Activated CD4-positive, alpha-beta memory T cell treated with anti-CD3 and anti-CD28 coated beads for 36 hours (primary cell): ENCODE measurements at regions of chr13 and their contacts with region 1.

Region 1: DNA sequence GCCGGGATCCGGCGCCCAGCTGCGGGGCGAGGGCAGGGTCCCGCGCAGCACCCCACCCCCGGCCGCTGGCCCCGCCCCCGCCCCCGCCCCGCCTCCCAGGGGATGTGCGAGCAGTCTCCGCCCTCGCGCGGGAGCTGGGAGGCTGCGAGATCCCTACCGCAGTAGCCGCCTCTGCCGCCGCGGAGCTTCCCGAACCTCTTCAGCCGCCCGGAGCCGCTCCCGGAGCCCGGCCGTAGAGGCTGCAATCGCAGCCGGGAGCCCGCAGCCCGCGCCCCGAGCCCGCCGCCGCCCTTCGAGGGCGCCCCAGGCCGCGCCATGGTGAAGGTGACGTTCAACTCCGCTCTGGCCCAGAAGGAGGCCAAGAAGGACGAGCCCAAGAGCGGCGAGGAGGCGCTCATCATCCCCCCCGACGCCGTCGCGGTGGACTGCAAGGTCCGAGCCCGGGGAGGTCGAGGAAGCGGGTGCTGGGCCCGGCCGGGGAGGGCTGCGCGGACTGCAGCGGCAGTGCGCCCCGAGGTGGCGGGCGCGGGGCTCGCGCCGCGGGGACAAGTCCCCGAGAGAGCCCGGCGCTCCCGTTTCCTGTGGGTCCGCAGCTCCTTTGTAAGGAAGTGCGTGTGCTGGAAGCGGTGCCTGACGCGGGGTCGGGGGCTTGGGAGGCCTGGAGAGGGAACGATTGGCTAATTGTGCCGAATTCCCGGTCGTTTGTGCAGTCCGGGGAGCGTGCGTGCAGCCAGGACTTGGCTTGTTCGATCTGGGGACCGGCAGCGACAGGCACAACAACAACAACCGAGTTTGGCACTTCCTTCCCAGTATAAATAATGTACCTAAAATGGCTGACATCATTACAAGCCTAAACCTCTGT is at the start of gene ITM2B:
- DNase-seq: peak; percentile 74
- H3K4me3 Mint-ChIP-seq: peak within 1 kb of the TSS; percentile 93
- H3K27ac Mint-ChIP-seq: peak within 1 kb of the TSS; percentile 95
- H3K4me1 Mint-ChIP-seq: peaks cover 57% of the 10 kb centered on the region
- H3K27me3 Mint-ChIP-seq: no peaks in the 10 kb centered on the region
- total RNA-seq, gene ITM2B: 87.6 to 92.6 TPM

Region 2: GRCh38 chr13:48018625-48019024 is 214.7 kb before region 1 on chr13:
- CTCF ChIA-PET with region 1: no interaction called
- POLR2A ChIA-PET with region 1: no interaction called
- intact Hi-C with region 1: no loop called
- DNase-seq: no peak
- H3K4me3 Mint-ChIP-seq: no peak overlapping the region
- H3K27ac Mint-ChIP-seq: no peak overlapping the region
- H3K4me1 Mint-ChIP-seq: no peaks in the 10 kb centered on the region
- H3K27me3 Mint-ChIP-seq: no peaks in the 10 kb centered on the region

Region 3: DNA sequence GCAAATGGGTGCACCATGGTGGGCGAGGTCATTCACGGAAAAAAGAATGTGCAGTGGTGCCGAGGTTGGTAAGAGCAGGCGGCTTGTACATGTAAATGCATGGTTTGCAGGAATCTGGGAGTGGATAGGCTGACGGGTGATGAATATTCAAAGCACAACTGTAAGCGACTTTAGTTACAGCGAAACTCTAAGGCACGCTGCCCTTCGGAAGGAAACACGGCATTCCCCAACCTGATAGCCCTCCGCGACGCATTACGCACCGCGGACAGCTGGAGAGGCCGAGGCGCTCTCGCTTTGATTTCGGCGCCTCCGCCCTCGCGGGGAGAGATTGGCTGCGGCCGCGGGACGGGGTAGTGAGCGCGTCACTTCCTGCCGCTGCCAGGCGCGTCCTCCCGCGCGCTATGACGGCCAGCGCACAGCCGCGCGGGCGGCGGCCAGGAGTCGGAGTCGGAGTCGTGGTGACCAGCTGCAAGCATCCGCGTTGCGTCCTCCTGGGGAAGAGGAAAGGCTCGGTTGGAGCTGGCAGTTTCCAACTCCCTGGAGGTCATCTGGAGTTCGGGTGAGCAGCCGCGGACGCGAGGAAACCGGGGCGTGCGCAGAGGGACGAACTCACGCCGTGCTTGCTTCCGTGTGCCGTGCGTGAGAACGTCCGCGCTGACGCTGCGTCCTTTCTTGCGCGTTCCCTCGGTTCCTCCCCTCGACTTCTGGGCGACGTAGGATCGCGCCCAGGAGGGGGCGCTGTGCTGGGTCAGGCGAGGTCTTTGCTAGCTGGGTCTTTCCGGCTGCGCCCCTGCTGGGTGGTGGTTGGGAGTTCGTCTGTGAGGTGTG is 195.7 kb before region 1 on chr13 and contains the start of gene NUDT15:
- CTCF ChIA-PET with region 1: interaction called, 5 read pairs
- POLR2A ChIA-PET with region 1: interaction called, 4 read pairs
- intact Hi-C with region 1: loop called (anchors 5 kb)
- DNase-seq: peak; percentile 97
- H3K4me3 Mint-ChIP-seq: peak within 1 kb of the TSS; percentile 96
- H3K27ac Mint-ChIP-seq: peak within 1 kb of the TSS; percentile 98
- H3K4me1 Mint-ChIP-seq: peaks cover 29% of the 10 kb centered on the region
- H3K27me3 Mint-ChIP-seq: no peaks in the 10 kb centered on the region
- total RNA-seq, gene NUDT15: 18.5 to 19.2 TPM

Region 4: GRCh38 chr13:48155848-48156247 is 77.4 kb before region 1 on chr13:
- CTCF ChIA-PET with region 1: no interaction called
- POLR2A ChIA-PET with region 1: no interaction called
- intact Hi-C with region 1: loop called (anchors 1 kb)
- DNase-seq: no peak
- H3K4me3 Mint-ChIP-seq: peak overlapping the region; percentile 64
- H3K27ac Mint-ChIP-seq: peak overlapping the region; percentile 95
- H3K4me1 Mint-ChIP-seq: peaks cover 84% of the 10 kb centered on the region
- H3K27me3 Mint-ChIP-seq: no peaks in the 10 kb centered on the region

Region 5: DNA sequence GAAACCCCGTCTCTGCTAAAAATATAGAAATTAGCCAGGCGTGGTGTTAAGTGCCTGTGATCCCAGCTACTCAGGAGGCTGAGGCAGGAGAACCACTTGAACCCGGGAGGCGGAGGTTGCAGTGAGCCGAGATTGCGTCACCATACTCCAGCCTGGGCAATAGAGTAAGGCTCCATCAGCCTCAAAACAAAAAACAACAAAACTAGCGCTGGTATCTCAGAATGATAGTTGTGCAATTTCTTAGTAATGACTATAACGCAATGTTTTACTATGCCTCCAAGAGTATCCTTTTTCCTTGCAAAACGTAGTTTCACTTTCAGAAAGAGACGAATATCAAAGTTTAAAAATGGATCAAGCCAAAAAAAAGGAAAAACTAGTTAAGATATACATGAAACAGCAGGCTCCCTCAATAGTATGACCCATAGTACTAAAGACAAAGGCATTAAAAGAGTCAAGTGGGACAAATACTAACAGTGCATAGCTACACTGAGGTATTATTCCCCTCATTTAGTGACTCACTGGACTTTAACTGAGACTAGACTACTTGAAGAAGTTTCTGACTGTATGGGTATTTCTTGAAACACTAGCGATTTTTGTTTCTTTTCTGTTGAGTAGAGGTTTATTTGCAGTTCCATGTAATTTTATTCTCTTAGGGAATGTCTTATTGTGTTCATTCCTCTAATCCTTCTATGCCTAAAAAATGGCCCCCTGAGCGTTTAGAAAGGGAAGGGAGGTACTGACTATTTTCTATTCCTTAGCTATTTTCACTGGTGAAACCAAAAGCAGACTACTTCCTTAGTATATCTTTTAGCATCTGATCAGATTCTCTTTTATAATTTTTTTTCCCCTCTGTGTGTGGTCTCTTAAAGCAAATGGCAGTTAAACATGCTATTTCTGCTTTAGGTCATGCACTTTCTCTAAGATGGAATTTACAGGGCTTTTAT is 10.6 kb before region 1 on chr13:
- CTCF ChIA-PET with region 1: interaction called, 16 read pairs
- POLR2A ChIA-PET with region 1: interaction called, 21 read pairs
- intact Hi-C with region 1: loop called (anchors 1 kb)
- DNase-seq: peak; percentile 30
- H3K4me3 Mint-ChIP-seq: peak overlapping the region; percentile 35
- H3K27ac Mint-ChIP-seq: no peak overlapping the region
- H3K4me1 Mint-ChIP-seq: peaks cover 51% of the 10 kb centered on the region
- H3K27me3 Mint-ChIP-seq: no peaks in the 10 kb centered on the region

Region 6: GRCh38 chr13:48400850-48401291 is 167.6 kb after region 1 on chr13:
- CTCF ChIA-PET with region 1: no interaction called
- POLR2A ChIA-PET with region 1: no interaction called
- intact Hi-C with region 1: loop called (anchors 5 kb)
- DNase-seq: no peak
- H3K4me3 Mint-ChIP-seq: no peak overlapping the region
- H3K27ac Mint-ChIP-seq: peak overlapping the region; percentile 11
- H3K4me1 Mint-ChIP-seq: peaks cover 66% of the 10 kb centered on the region
- H3K27me3 Mint-ChIP-seq: no peaks in the 10 kb centered on the region

Region 7: DNA sequence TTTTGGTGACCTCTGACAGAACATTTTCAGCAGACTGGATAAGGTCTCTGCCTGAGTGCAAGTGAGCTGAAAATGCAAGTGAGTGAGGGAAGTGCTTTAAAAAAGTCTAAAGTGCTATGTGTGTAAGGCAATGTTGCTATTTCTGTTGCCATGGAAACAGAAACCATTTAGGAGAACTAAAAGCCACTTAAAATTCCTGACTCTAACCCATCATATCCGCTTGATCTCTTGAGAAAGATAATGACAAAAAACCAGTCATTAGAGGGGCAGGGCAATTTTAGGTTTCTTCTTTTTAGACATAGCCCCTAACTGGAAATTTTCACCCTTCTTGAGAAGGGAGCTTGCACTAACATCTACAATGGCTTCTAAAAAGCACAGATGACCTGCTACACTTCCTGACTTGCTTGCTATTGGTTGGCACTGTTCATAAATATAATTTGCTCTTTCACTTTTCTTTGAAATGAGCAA is 420.2 kb after region 1 on chr13 and contains the start of gene CYSLTR2:
- CTCF ChIA-PET with region 1: no interaction called
- POLR2A ChIA-PET with region 1: no interaction called
- intact Hi-C with region 1: loop called (anchors 10 kb)
- DNase-seq: peak; percentile 16
- H3K4me3 Mint-ChIP-seq: peak within 1 kb of the TSS; percentile 75
- H3K27ac Mint-ChIP-seq: peak within 1 kb of the TSS; percentile 81
- H3K4me1 Mint-ChIP-seq: peaks cover 33% of the 10 kb centered on the region
- H3K27me3 Mint-ChIP-seq: no peaks in the 10 kb centered on the region
- total RNA-seq, gene CYSLTR2: 2.1 to 2.4 TPM